ENCODE measurements at regions of chr4 and their contacts with region 1.

Region 1: DNA sequence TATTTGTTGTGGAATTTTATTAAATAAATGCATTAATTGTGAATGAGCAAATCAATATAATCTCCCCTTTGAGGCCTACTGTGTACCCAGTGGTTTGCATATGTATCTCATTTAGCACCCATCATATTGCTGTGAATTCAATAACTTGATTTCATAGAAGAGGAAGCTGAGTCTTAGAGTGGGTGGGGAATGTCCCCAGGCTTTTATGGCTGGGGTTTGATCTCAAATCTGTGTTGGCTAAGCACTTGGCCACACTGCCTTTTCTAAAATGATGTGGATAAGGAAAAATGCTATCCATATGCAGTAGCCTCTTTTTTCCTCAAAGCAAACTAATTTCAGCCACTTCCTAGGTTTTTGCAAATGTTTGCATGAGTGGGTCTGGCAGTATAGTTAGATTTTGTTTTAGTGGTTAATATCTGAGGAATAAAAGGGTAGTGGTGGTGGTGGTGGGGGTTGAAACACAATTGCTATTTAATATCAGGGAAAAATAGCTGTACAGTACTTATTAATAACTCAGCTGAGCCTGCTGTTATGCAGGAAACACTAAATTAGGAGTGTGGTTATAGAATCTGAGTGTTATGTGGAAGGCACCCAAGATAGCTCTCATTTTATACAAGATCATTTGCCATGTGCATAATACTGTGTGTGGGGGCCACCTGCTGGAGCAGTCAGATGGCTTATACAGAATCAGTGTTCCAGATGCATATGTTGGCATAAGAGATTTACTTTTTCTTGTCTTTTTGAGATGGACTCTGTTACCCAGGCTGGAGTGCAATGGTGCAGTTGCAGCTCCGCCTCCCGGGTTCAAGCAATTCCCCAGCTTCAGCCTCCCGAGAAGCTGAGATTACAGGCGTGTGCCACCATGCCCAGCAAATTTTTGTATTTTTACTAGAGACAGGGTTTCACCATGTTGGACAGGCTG is 108.0 kb downstream of the TMEM131L start:
- DNase-seq: peak; percentile 85
- H3K4me3 ChIP-seq: no peak overlapping the region
- H3K27ac ChIP-seq: no peak overlapping the region
- H3K4me1 ChIP-seq: peaks cover 2% of the 10 kb centered on the region
- H3K27me3 ChIP-seq: no peaks in the 10 kb centered on the region
- CTCF ChIP-seq: peak; percentile 46 to 59
- POLR2A ChIP-seq: no peak

Region 2: GRCh38 chr4:153204247-153205027 is 369.7 kb before region 1 on chr4 and contains the start of gene TRIM2:
- CTCF ChIA-PET with region 1: interaction called, 6 read pairs
- POLR2A ChIA-PET with region 1: no interaction called
- dilution Hi-C with region 1: no loop called
- intact Hi-C with region 1: loop called (anchors 1 kb)
- DNase-seq: peak; percentile 67
- H3K4me3 ChIP-seq: no peak within 1 kb of the TSS
- H3K27ac ChIP-seq: no peak within 1 kb of the TSS
- H3K4me1 ChIP-seq: peaks cover 2% of the 10 kb centered on the region
- H3K27me3 ChIP-seq: no peaks in the 10 kb centered on the region
- CTCF ChIP-seq: no peak
- POLR2A ChIP-seq: no peak
- total RNA-seq, gene TRIM2: 16.4 and 19.7 TPM in 2 replicates

Region 3: GRCh38 chr4:153337686-153338085 is 236.5 kb before region 1 on chr4:
- CTCF ChIA-PET with region 1: interaction called, 129 read pairs
- POLR2A ChIA-PET with region 1: no interaction called
- dilution Hi-C with region 1: no loop called
- intact Hi-C with region 1: no loop called
- DNase-seq: peak; percentile 59
- H3K4me3 ChIP-seq: no peak overlapping the region
- H3K27ac ChIP-seq: no peak overlapping the region
- H3K4me1 ChIP-seq: peaks cover 13% of the 10 kb centered on the region
- H3K27me3 ChIP-seq: no peaks in the 10 kb centered on the region
- CTCF ChIP-seq: no peak
- POLR2A ChIP-seq: no peak

Region 4: DNA sequence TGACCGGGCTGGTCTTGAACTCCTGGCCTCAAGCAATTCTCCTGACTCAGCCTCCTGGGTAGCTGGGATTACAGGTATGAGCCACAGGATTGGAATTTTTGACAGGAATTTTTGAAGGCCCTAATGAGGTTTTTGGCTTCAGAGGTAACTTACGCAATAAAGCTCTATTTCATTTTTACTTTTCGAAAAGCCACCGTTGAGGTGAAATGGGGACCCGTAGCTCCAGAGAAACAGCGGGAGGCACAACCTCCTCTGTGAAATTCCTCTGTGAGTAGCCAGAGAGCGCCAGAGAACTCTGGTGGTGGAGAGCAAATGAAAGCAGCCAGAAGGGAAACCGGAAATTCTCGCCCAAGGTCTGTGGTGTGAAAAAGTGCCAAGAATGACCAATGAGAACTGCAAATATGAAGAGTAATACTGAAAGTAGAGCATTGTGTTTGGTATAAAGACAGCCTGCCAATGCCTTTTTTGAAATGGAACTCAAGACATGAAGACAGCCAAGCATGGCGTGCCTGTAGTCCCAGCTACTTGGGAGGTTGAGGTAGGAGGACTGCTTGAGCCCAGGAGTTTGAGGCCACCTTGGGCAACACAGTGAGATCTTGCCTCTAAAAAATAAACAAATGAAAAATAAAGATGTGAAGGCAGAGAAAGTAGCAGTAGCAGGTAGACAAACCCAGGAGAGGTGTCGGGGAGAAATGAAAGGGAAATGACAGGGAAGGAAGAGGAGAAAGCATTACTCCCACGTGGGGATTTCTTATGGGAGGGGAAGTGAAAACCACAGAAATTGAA is 141.0 kb before region 1 on chr4:
- CTCF ChIA-PET with region 1: interaction called, 33 read pairs
- POLR2A ChIA-PET with region 1: no interaction called
- dilution Hi-C with region 1: no loop called
- intact Hi-C with region 1: loop called (anchors 1 kb)
- DNase-seq: peak; percentile 45
- H3K4me3 ChIP-seq: no peak overlapping the region
- H3K27ac ChIP-seq: no peak overlapping the region
- H3K4me1 ChIP-seq: no peaks in the 10 kb centered on the region
- H3K27me3 ChIP-seq: no peaks in the 10 kb centered on the region
- CTCF ChIP-seq: peak; percentile 45 to 46
- POLR2A ChIP-seq: no peak

Region 5: DNA sequence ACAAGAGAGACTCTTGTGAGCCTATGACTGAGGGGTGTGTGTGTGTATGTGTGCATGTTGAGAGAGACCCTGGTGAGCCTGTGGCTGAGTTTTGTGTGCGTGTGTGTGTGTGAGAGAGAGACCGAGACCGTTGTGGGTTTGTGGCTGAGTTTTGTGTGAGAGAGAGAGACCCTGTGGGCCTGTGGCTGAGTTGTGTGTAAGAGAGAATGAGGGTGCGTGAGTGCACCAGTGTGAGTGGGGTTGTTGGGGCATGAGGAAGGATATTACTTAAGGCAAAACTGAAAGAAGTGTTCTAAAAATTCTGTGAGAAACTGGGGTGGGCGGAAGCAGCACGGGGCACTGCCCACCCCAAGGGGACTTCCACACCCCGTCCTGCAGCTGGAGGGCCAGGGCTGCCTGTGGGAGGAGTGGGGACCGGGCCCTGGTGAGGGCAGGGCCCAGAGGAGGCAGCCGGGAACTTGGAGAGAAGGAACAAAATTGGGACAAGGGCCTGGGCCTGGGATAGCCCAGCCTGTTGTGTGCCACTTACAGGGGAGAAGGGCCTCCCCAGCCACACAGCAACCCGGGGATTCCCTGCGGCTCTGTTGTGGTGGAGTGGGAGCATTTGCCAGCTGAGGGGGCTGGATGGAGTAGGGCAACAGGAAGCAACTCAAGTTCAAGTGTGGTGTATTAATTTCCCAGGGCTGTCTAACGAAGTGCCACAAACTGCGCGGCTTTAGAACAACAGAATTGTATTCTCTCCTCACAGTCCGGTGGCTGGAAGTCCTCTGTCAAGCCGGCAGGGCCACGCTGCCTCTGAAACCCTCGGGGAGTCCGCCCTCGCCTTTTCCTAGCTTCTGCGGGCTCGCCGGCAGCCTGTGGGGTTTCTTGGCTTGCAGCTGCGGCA is 85.9 kb before region 1 on chr4:
- CTCF ChIA-PET with region 1: interaction called, 15 read pairs
- POLR2A ChIA-PET with region 1: no interaction called
- dilution Hi-C with region 1: no loop called
- intact Hi-C with region 1: no loop called
- DNase-seq: peak; percentile 50
- H3K4me3 ChIP-seq: no peak overlapping the region
- H3K27ac ChIP-seq: no peak overlapping the region
- H3K4me1 ChIP-seq: peaks cover 28% of the 10 kb centered on the region
- H3K27me3 ChIP-seq: no peaks in the 10 kb centered on the region
- CTCF ChIP-seq: no peak
- POLR2A ChIP-seq: no peak

Region 6: DNA sequence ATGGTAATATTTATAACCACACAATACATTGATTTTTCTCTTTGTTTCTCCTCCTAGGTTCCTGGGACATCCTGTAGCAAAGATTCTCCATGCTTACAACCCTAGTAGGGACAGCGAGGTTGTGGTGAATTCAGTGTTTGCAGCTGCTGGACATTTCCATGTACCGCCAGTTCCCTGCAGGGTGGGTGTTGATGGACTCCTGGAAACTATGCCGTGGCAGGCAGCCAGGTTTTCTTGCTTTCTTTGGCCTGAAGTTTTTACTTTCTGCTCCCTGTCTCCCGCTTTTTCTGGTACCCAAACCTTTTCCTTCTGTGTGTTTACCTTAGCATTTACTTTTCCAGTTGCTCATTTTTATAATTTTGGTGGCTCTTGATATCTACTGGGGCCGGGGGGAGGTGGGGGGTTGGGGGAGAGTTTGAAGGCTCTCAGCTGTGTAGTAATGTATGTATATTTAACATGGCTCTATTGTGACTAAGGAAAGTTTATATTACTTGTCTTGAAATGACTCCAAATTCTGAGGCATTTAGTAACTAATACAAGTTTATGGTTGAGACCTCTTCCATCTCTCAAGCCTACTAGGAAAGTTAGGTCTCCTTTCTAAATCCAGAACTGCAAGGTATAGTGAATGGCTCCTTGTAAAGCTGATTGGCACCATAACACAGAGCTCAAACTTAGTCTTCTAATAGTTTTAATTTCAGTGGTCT is 18.3 kb before region 1 on chr4:
- CTCF ChIA-PET with region 1: interaction called, 17 read pairs
- POLR2A ChIA-PET with region 1: no interaction called
- dilution Hi-C with region 1: no loop called
- intact Hi-C with region 1: no loop called
- DNase-seq: peak; percentile 90
- H3K4me3 ChIP-seq: no peak overlapping the region
- H3K27ac ChIP-seq: no peak overlapping the region
- H3K4me1 ChIP-seq: no peaks in the 10 kb centered on the region
- H3K27me3 ChIP-seq: no peaks in the 10 kb centered on the region
- CTCF ChIP-seq: no peak
- POLR2A ChIP-seq: no peak

Region 7: GRCh38 chr4:153759407-153760316 is 185.5 kb after region 1 on chr4 and contains the start of gene RNF175:
- CTCF ChIA-PET with region 1: no interaction called
- POLR2A ChIA-PET with region 1: no interaction called
- dilution Hi-C with region 1: no loop called
- intact Hi-C with region 1: no loop called
- DNase-seq: no peak
- H3K4me3 ChIP-seq: peak within 1 kb of the TSS in 1 of 3 experiments; percentile 15
- H3K27ac ChIP-seq: no peak within 1 kb of the TSS
- H3K4me1 ChIP-seq: no peaks in the 10 kb centered on the region
- H3K27me3 ChIP-seq: peaks cover 33 to 34% of the 10 kb centered on the region in 2 experiments
- CTCF ChIP-seq: no peak
- POLR2A ChIP-seq: no peak
- total RNA-seq, gene RNF175: not detected in 2 replicates

Measured in endothelial cell of umbilical vein (primary cell).